Transverse colon (tissue), 4 donors: ENCODE measurements at regions of chr3 and their contacts with region 1.

Region 1: GRCh38 chr3:36969540-36970432 is 23.1 kb downstream of the EPM2AIP1 start:
- DNase-seq: no peak
- H3K4me3 ChIP-seq: no peak overlapping the region
- H3K27ac ChIP-seq: no peak overlapping the region
- H3K4me1 ChIP-seq: peaks cover 0 to 4% (median 0%) of the 10 kb centered on the region in 4 donors
- H3K27me3 ChIP-seq: no peaks in the 10 kb centered on the region
- CTCF ChIP-seq: no peak
- EP300 ChIP-seq: no peak
- POLR2A ChIP-seq: no peak

Region 2: DNA sequence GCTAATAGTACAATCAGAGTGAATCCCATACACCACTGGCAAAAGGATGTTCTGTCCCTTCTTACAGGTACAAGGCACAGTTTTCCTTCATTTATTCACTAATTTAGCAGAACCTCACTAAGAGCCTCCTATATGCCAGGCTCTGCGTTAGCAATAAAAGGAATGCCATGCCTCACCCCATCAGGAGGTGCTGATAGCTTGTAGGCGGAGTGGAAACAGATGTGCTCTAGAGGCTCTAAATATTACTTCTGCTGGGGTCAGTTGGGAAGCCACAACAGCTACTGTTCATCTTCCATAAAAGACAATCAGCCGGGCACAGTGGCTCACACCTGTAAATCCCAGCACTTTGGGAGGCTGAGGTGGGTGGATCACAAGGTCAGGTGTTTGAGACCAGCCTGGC is 47.9 kb after region 1 on chr3:
- in situ Hi-C with region 1: no loop called
- intact Hi-C with region 1: loop called (anchors 2 kb)
- DNase-seq: no peak
- H3K4me3 ChIP-seq: no peak overlapping the region
- H3K27ac ChIP-seq: no peak overlapping the region
- H3K4me1 ChIP-seq: no peaks in the 10 kb centered on the region
- H3K27me3 ChIP-seq: no peaks in the 10 kb centered on the region
- CTCF ChIP-seq: no peak
- EP300 ChIP-seq: no peak
- POLR2A ChIP-seq: no peak